AG04449 (cell line): ENCODE measurements at regions of chr22 and their contacts with region 1.

Region 1: DNA sequence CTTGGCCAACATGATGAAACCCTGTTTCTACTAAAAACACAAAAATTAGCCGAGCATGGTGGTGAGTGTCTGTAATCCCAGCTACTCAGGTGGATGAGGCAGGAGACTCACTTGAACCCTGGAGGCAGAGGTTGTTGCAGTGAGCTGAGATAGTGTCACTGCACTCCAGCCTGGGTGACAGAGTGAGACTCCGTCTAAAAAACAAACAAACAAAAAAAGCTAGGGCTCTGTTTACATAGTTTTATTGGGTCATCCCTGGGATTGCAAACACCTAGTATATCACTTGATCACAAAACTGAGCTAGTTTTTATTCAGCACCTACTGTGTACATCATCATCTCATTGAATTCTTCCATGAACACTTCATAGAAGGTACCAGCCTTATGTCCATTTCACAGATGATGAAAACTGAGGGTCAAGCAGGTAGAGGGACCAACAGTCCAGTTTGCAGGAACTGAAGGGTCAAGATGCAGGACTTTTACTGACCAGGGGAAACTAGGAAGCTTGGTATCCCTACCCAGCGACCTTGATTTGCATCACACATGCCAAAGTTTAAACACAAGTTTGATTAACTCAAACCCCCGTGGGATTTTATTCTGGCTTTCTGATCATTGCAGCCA is 9.2 kb upstream of the MRTFA start:
- DNase-seq: no peak
- H3K4me3 ChIP-seq: no peak overlapping the region
- CTCF ChIP-seq: no peak

Region 2: GRCh38 chr22:40463017-40463631 is 182.6 kb before region 1 on chr22:
- CTCF ChIA-PET with region 1: interaction called, 11 read pairs
- POLR2A ChIA-PET with region 1: no interaction called
- DNase-seq: no peak
- H3K4me3 ChIP-seq: no peak overlapping the region
- CTCF ChIP-seq: no peak

Region 3: DNA sequence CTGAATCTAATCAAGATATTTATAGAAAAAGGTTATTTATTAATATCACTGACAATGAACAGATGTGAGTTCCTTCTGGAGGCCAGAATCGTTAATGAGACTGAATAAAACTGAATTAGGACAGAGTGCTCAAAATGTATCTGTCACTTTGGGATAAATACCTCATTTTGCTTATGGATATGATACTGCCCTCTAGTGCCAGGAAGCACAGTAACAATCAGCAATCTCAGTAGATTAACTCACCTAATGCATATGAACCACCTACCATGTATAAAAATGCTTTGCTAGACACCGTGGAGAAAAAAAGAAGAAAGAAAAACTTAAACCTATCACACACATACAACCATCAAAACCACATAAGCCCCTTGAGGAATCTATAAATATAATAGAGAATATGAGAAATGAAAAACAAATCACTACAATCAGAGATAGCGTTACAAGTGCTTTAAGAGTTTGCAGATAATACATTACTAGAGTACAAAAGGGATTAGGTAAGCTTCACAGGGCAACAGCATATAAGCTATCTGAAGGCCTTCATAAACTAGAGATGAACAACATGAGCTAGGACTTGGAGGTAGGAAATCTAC is 157.9 kb before region 1 on chr22:
- CTCF ChIA-PET with region 1: interaction called, 27 read pairs
- POLR2A ChIA-PET with region 1: no interaction called
- DNase-seq: no peak
- H3K4me3 ChIP-seq: no peak overlapping the region
- CTCF ChIP-seq: peak; percentile 67

Region 4: DNA sequence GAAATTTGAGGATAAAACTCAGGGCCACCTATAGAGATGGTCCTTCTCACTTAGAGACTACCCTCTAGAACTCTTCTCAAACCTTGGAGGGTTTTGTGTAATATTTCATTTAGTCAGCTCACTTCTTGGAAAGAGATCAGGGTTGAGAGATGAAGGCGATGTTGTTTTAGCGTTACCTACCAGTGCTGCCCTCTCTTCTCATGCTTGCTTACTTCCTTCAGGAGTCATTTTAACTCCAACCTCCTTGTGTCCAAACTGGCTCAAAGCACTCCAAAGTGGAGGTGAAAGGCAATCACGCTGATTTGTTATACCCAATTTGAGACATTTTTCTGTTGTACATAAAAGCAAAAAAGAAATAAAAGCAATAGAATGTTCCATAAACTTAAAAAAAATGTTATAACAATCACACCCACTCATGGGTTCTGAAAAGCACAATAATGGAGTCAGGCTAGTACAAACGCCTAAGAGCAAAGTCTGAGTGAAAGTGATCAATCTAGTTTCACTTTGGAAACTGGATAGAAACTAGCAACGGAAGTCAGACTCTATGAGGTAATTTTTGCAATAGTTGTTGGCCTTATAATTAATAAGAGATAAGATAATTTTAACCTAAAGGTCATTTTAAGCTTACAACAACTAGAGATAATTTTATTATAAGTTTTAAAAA is 126.3 kb before region 1 on chr22:
- CTCF ChIA-PET with region 1: interaction called, 86 read pairs
- POLR2A ChIA-PET with region 1: no interaction called
- DNase-seq: no peak
- H3K4me3 ChIP-seq: no peak overlapping the region
- CTCF ChIP-seq: no peak

Region 5: DNA sequence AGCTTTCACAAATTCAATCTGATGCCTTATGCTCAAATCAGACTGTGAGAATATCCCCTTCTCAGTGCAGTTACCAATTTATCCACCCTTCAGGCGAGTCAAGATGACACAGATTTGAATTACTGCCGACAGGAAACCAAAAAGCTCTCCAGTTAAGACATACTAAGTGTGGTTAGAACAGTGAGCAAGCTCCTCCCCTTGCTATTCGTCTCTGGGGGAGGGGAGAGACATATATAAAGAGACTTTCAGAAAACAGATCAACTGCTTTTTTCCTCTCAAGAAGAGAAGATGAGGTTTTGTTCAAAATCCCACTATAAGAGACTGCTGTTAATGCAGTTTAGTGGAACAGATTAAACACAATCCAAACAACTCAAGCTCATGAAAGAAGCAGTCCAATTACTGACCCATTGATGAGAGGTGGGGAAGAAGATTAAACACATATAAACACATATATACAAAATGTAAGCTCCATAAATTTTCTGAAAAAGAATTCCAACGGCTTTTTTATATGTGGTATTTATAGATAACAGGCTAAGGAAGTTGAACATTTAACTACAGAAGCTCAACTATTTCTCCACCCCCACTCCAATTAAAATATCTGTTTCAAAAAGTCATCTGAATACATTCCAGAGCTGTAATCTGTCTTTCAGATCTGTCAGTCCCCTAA is 111.8 kb before region 1 on chr22:
- CTCF ChIA-PET with region 1: interaction called, 28 read pairs
- POLR2A ChIA-PET with region 1: no interaction called
- DNase-seq: no peak
- H3K4me3 ChIP-seq: peak overlapping the region; percentile 56
- CTCF ChIP-seq: no peak

Region 6: GRCh38 chr22:40898850-40899357 is 253.2 kb after region 1 on chr22:
- CTCF ChIA-PET with region 1: interaction called, 16 read pairs
- POLR2A ChIA-PET with region 1: no interaction called
- DNase-seq: no peak
- H3K4me3 ChIP-seq: no peak overlapping the region
- CTCF ChIP-seq: peak; percentile 40